Posterior cingulate gyrus (tissue), 11 donors: ENCODE measurements at regions of chr19 and their contacts with region 1.

Region 1: DNA sequence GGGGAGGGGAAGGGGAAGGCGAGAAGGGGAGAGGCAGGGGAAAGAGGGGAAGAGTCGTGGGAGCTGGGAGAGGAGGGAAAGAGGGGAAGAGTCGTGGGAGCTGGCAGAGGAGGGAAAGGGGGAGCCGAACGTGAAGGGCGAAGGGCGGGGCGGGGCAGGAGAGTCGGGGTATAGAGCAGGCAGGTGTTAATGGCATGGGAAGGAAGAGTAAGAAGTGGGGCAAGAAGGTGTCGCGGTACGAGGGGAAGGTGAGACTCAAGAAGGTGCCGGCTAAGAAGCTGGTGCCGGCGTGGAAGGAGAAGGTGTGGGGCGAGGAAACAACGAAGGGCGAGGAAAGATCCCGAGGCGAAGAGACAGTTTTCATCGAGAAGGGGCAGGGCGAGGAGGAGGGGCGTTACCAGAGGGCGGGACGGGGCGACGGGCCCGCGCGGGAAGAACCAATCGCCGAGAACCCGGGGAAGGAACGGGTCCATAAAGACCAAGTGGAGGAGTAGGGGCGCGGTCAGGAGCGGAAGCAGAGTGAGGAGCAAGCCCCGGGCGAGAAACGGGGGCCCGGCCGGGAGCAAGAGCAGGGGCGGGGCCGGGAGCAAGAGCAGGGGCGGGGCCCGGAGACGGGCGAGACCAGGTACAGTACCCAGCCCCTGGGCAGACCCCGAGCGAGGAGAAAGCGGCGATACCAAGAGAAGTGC is 463 bp downstream of the CATSPERG start:
- DNase-seq: peak; percentile 92 to 99 (median 94)

Region 2: DNA sequence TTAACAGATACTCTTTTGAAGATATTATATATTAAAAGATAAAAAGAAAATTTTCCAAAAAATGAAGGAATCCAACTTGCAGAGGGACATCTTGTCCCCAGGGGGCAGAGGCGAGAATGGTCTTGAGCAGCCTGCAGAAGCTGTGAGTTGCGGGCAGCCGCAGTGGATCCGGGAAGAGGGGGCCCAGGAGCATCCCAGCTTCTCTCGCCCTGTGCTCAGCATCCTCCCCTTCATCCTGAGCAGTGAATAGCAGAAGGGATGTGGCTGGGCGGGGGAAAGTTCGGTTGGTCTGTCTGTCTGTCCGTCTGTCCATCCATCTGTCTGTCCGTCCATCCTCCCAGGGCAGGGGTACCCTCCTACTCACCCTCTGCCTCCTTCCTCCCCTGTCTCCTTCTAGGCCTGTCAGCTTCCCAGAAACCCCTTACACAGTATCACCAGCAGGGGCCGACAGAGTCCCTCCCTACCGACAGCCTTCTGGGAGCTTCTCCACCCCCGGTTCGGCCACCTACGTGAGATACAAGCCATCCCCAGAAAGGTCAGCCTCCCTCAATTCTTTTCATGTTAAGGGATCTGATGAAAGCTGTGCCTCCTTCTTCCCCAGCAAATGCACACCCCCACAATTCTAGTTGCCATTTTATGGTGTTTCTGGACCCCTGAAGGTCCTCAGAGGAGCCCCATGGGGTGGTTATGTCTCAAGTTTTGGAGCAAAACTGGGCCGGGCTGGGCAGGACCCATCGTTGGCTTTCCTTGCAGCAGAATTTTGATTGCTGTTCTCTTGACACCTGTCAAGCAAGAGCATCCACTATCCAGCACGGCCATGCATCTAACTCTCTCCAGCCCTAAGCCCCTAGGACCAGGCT is 193.7 kb before region 1 on chr19:
- intact Hi-C with region 1: loop called (anchors 5 kb)
- DNase-seq: peak; percentile 57 to 97 (median 83)

Region 3: DNA sequence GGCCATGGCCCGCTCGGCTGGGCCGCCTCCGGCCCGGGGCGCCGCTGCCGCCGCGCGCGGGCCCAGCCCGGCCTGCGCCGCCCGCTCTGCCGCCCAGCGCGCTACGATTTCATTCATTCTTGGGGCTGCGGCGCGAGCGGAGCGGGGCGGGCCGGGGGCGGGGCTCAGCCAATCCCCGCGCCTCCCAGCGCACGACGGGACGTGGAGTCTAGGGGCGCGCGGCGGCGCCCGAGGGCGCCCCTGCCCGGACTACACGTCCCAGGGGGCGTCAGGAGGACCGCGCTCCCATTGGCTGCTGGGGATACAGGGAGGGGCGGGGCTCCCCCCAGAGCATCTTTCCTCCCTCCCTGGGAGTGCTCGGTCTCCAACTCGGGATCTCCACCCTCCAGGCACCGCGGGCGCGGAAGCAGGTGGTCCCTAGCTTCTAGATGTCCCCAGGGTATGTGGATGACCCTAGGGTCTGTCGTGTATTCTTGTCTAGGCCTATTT is 106.5 kb before region 1 on chr19:
- intact Hi-C with region 1: loop called (anchors 2 kb)
- DNase-seq: peak; percentile 85 to 99 (median 96)

Region 4: DNA sequence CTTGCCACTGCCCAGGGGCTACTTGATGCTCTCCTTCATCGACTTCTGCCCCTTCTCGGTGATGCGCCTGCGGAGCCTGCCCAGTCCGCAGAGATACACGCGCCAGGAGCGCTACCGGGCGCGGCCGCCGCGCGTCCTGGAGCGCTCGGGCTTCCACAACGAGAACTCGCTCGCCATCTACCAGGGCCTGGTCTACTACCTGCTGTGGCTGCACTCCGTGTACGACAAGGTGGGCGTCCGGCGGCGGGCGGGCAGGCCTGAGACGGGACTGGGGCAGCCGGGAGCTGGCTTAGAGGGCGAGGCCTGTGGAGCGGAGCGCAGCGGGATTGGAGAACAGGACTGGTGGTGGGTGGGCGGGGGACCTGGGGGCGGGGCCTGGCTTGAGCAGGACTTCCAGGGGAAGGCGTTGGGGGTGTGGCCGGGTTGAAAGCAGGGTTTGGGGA is 25.6 kb after region 1 on chr19:
- intact Hi-C with region 1: no loop called
- DNase-seq: peak; percentile 35 to 94 (median 58)

Region 5: GRCh38 chr19:38374429-38375176 is 38.5 kb after region 1 on chr19 and contains the start of gene PSMD8:
- intact Hi-C with region 1: loop called (anchors 1 kb)
- DNase-seq: peak; percentile 99 to 100 (median 100)